HepG2 (cell line): ENCODE measurements at regions of chr17 and their contacts with region 1.

Region 1: GRCh38 chr17:81238817-81239600 is at the starts of genes NDUFAF8 and TEPSIN:
- DNase-seq: peak; percentile 100
- ATAC-seq: peak; percentile 95
- H3K4me3 ChIP-seq: peak within 1 kb of the TSS; percentile 94 to 98 (median 96)
- H3K27ac ChIP-seq: peak within 1 kb of the TSS; percentile 81
- H3K4me1 ChIP-seq: peaks cover 27% of the 10 kb centered on the region
- H3K27me3 ChIP-seq: no peaks in the 10 kb centered on the region; a peak in 1 of 5 replicates
- CTCF ChIP-seq: no peak
- EP300 ChIP-seq: no peak
- POLR2A ChIP-seq: peak; percentile 61 to 85
- RAD21 ChIP-seq: peak; percentile 63
- total RNA-seq, gene NDUFAF8: 213 and 233 TPM in 2 replicates
- total RNA-seq, gene TEPSIN: 8.5 and 18.8 TPM in 2 replicates

Region 2: GRCh38 chr17:81152288-81152828 is 86.7 kb before region 1 on chr17:
- CTCF ChIA-PET with region 1: no interaction called
- POLR2A ChIA-PET with region 1: no interaction called
- in situ Hi-C with region 1: no loop called
- intact Hi-C with region 1: no loop called
- DNase-seq: no peak
- ATAC-seq: no peak
- H3K4me3 ChIP-seq: no peak overlapping the region
- H3K27ac ChIP-seq: no peak overlapping the region
- H3K4me1 ChIP-seq: peaks cover 4% of the 10 kb centered on the region; the same call in 1 of the 2 replicates
- H3K27me3 ChIP-seq: no peaks in the 10 kb centered on the region
- CTCF ChIP-seq: no peak
- EP300 ChIP-seq: no peak
- POLR2A ChIP-seq: no peak
- RAD21 ChIP-seq: no peak

Region 3: DNA sequence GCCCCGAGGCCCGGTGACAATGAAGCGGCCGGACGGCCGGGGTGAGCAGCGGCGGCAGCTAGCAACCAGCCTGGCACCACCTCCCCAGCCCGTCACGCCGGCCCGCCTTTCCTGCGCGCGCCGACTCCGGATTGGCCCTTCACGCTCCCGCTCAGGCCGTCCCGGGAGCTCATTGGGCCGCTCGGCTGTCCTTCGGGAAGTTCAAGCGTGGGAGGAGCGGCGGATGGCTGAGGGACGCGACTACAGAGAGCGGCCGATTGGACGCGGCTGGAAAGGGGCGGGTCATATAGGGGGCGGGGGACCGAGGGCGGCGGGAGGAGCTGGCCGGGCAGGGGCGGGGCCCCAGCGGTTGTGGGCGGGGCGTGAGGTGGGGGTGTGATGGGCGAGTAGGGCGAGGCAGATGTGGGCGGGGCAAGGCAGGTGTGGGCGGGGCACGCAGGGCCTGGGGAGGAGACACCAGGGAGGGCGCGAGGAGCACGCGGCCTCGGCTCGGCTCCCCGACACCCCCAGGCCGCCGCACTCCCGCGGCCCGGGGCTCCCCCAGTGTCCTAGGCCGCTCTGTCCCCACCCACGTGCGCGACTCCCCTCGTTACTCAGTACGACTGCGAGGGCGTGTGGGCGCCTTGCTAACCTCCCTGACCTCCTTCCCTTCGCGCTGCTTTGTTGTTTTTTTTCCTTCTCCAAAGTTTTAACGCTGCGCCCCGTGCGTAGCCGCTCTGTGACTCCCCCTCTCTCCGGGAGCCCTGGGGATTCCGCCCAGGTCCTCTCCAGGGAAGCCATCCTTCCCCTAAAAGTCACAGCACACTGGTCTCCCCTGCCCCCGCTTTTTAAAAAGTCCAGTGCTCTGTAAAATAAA is 15.9 kb before region 1 on chr17 and contains the start of gene CEP131:
- CTCF ChIA-PET with region 1: no interaction called
- POLR2A ChIA-PET with region 1: interaction called, 61 read pairs
- in situ Hi-C with region 1: no loop called
- intact Hi-C with region 1: loop called (anchors 1 kb)
- DNase-seq: peak; percentile 97
- ATAC-seq: peak; percentile 97
- H3K4me3 ChIP-seq: peak within 1 kb of the TSS; percentile 63 to 91 (median 87)
- H3K27ac ChIP-seq: peak within 1 kb of the TSS; percentile 56
- H3K4me1 ChIP-seq: peaks cover 32% of the 10 kb centered on the region
- H3K27me3 ChIP-seq: no peaks in the 10 kb centered on the region
- CTCF ChIP-seq: 0 out of 2 replicates have a peak, but pooled peaks have one; percentile 14
- EP300 ChIP-seq: no peak
- POLR2A ChIP-seq: peak; percentile 71 to 97
- RAD21 ChIP-seq: peak; percentile 15
- total RNA-seq, gene CEP131: 11.1 and 16.8 TPM in 2 replicates